Activated CD4-positive, alpha-beta T cell treated with anti-CD3 and anti-CD28 coated beads, Interleukin-2, amount 10 ng/mL, durations not matched to agents 24 days and 14 days (primary cell): ENCODE measurements at regions of chr1 and their contacts with region 1.

Region 1: DNA sequence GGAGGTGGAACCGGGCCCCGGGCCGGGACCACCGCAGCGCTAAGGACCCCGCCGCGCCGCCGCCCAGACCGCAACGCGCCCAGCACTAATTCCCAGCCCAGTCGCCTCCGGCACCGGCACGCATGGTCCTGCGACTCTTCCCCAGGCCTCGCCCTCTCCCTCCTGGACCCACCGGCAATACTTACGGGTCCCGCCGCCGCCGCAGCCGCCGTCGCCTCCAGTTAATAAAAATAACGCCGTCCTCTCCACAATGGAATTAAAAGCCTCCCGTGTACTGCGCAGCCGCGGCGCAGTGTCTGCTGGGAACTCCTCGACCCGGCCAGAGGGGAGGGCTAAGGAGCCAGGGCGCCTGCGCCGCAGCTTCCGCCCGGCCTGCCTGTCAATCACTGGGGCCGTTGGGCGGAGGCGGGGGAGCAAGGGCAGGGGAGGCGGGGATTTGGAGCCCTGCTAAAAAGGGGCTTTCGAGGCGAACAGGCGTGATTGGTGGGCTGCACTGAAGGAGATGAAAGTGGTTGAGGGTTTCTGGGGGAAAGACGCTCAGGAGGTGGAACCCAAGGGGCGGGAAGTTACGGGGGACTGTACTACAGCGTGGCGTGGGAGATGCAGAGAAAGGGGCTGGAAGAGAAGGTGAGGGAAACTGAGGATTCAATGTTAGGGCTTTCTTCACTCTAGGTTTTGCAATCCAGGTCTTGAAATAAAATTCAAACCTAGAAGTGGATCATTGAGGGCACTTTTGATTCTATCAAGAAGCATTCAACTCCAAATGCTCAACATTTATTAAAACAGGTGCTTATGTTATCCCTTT is at the start of gene ZNF281:
- DNase-seq: peak; percentile 98
- H3K4me3 Mint-ChIP-seq: peak within 1 kb of the TSS; percentile 90
- H3K27ac Mint-ChIP-seq: peak within 1 kb of the TSS; percentile 95
- H3K4me1 Mint-ChIP-seq: peaks cover 50% of the 10 kb centered on the region
- H3K27me3 Mint-ChIP-seq: peaks cover 8% of the 10 kb centered on the region
- total RNA-seq, gene ZNF281: 19.0 and 20.4 TPM in 2 replicates

Region 2: DNA sequence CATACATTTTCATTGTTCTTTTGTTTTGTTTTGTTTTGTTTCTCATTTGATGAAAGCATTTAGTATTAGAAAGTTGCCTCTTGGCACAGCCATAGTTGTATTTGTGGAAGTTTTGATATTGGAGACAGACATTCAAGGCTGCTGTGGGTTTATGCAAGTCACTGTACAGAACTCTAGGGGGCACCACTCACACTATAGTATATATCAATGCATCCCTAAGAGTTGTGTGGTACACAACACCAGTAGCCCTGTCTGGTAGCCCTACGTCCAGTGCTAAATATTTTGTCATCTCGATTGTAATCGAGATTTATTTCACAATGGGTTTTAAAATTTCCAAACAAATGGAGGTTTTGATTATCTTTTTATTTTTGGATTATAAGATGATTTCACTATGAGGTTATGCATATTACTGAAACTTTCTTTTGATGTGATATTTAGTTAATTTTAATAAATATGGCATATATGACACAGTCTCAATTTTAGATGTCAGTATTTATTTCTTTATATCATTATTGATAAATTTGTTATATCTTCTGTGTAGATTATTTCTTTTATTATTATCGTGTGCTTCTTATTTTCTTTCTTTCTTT is 270.2 kb before region 1 on chr1:
- intact Hi-C with region 1: loop called (anchors 5 kb)
- DNase-seq: peak; percentile 79
- H3K4me3 Mint-ChIP-seq: no peak overlapping the region
- H3K27ac Mint-ChIP-seq: no peak overlapping the region
- H3K4me1 Mint-ChIP-seq: peaks cover 5% of the 10 kb centered on the region
- H3K27me3 Mint-ChIP-seq: peaks cover 9% of the 10 kb centered on the region

Region 3: DNA sequence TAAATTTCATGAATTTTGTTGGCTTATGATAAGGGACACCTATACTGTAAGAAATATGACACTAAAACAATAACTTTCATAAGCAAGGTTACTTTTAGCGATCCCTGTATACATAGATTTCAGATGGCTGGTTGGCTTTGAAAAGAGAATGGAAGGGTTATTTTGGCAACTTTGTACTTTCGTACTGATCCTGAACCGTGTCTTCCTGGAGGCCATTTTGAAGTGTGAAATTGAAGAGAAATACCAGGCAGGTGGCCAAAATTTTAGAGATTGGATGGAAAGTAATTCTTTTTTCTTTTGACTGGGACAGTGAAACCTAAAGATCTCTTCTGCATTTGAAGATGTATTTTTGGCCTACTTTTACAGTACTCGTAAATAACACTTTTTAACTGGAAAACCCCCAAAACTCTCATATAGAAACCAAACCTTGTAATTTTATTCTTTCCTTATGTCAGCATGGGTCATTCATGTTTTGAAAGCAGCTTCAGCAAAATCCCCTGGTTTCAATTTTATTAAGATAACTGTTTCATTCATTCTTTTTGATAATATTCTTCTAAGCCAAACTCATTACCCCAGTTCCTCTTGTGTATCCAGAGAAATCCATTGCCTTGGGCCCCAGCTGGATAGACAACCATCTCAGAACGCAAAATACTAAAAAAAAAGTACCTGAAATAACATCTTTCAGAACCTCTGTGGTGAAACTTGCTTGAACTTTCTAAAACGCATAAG is 38.2 kb after region 1 on chr1:
- intact Hi-C with region 1: loop called (anchors 1 kb)
- DNase-seq: no peak
- H3K4me3 Mint-ChIP-seq: peak overlapping the region; percentile 33
- H3K27ac Mint-ChIP-seq: peak overlapping the region; percentile 95
- H3K4me1 Mint-ChIP-seq: peaks cover 38% of the 10 kb centered on the region
- H3K27me3 Mint-ChIP-seq: no peaks in the 10 kb centered on the region